Caco-2 (cell line): ENCODE measurements at regions of chr14 and their contacts with region 1.

Region 1: GRCh38 chr14:20413045-20413799 is at the start of gene TEP1:
- DNase-seq: peak; percentile 85 to 88
- H3K4me3 ChIP-seq: peak within 1 kb of the TSS; percentile 97
- H3K4me3 Mint-ChIP-seq: peak within 1 kb of the TSS; percentile 97
- H3K27ac Mint-ChIP-seq: peak within 1 kb of the TSS; percentile 93
- H3K4me1 ChIP-seq: peaks cover 32% of the 10 kb centered on the region
- H3K4me1 Mint-ChIP-seq: peaks cover 19% of the 10 kb centered on the region
- H3K27me3 ChIP-seq: no peaks in the 10 kb centered on the region
- H3K27me3 Mint-ChIP-seq: no peaks in the 10 kb centered on the region
- CTCF ChIP-seq: no peak
- total RNA-seq, gene TEP1: 18.8 and 23.2 TPM in 2 replicates

Region 2: GRCh38 chr14:20427231-20428009 is 14.2 kb after region 1 on chr14:
- CTCF ChIA-PET with region 1: interaction called, 4 read pairs
- POLR2A ChIA-PET with region 1: no interaction called
- intact Hi-C with region 1: loop called (anchors 2 kb)
- DNase-seq: no peak
- H3K4me3 ChIP-seq: peak overlapping the region; percentile 22
- H3K4me3 Mint-ChIP-seq: no peak overlapping the region
- H3K27ac Mint-ChIP-seq: peak overlapping the region; percentile 6
- H3K4me1 ChIP-seq: peaks cover 22% of the 10 kb centered on the region
- H3K4me1 Mint-ChIP-seq: peaks cover 23% of the 10 kb centered on the region
- H3K27me3 ChIP-seq: no peaks in the 10 kb centered on the region
- H3K27me3 Mint-ChIP-seq: no peaks in the 10 kb centered on the region
- CTCF ChIP-seq: no peak

Region 3: DNA sequence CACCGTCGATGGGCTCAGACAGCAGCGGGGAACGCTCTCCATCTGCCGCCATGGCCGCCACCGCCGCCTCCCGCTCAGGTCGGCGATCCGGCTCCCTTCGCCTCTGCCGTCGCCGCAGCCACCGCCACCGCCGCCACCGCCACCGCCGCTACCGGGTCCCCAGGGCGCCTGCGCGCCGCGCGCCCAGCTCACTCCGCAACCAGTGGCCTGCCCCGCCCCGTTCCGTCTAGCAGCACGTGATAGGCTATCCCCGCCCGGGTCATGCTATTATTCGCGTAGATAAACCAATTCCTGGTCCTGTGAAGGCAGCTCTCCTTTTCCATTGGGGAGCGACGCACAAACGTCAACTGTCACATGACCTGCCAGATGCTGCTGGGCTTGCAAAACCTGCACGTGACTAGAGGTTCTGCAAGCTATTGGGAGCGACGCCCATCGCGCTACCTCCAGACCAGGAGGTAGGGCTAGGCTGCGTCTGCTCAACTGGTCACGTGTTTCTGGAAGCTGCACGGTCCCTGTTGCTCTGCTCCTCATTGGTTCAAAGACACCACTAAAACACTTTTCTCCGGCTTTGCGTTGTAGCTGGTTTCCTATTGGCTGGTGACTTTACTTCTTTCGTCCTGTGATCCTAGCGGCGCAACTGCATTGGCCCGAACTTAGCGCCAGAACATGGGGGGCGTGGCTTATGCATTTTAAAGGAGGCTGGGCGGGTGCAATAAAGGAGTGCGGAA is 48.2 kb after region 1 on chr14 and contains the start of gene PIP4P1:
- CTCF ChIA-PET with region 1: interaction called, 9 read pairs
- POLR2A ChIA-PET with region 1: interaction called, 11 read pairs
- intact Hi-C with region 1: no loop called
- DNase-seq: peak; percentile 99 to 100
- H3K4me3 ChIP-seq: peak within 1 kb of the TSS; percentile 93
- H3K4me3 Mint-ChIP-seq: peak within 1 kb of the TSS; percentile 83
- H3K27ac Mint-ChIP-seq: peak within 1 kb of the TSS; percentile 96
- H3K4me1 ChIP-seq: peaks cover 16% of the 10 kb centered on the region
- H3K4me1 Mint-ChIP-seq: peaks cover 17% of the 10 kb centered on the region
- H3K27me3 ChIP-seq: no peaks in the 10 kb centered on the region
- H3K27me3 Mint-ChIP-seq: no peaks in the 10 kb centered on the region
- CTCF ChIP-seq: no peak
- total RNA-seq, gene PIP4P1: 39.6 and 46.2 TPM in 2 replicates

Region 4: GRCh38 chr14:20539906-20540305 is 126.7 kb after region 1 on chr14:
- CTCF ChIA-PET with region 1: no interaction called
- POLR2A ChIA-PET with region 1: no interaction called
- intact Hi-C with region 1: loop called (anchors 10 kb)
- DNase-seq: no peak
- H3K4me3 ChIP-seq: no peak overlapping the region
- H3K4me3 Mint-ChIP-seq: no peak overlapping the region
- H3K27ac Mint-ChIP-seq: no peak overlapping the region
- H3K4me1 ChIP-seq: no peaks in the 10 kb centered on the region
- H3K4me1 Mint-ChIP-seq: no peaks in the 10 kb centered on the region
- H3K27me3 ChIP-seq: no peaks in the 10 kb centered on the region
- H3K27me3 Mint-ChIP-seq: peaks cover 2% of the 10 kb centered on the region
- CTCF ChIP-seq: no peak

Region 5: DNA sequence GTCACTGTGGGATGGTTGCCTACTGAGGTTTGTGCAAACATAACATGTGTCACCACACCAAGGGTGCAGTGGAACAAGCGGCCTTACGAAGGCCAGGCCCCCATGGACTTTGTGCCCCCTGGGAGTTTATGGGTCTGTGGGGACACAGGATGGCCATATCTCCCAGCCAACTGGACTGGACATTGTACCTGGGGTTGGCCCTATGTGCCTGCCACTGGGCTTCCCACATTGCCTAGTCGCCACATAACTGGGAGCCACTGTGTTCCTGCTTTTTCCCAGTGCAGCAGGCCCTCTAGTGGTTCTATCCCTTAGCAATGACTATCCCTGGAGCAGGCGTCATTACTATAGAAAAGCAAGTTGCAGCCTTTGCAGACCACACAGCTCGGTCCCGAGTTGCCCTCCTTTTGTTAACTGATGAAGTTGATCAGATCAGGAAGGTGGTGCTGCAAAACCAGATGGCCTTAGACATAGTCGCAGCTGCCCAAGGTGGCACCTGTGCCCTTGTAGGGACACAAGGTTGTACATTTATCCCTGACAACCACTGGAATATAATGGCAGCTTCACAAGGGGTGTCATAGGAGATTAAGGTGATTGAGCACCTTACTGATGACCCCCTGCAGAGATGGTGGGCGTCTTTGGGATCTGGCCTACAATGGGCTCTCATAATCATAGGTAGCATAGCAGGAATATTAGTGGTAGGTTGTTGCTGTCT is 193.1 kb after region 1 on chr14:
- CTCF ChIA-PET with region 1: interaction called, 3 read pairs
- POLR2A ChIA-PET with region 1: interaction called, 6 read pairs
- intact Hi-C with region 1: loop called (anchors 1 kb)
- DNase-seq: peak; percentile 68 to 73
- H3K4me3 ChIP-seq: no peak overlapping the region
- H3K4me3 Mint-ChIP-seq: no peak overlapping the region
- H3K27ac Mint-ChIP-seq: no peak overlapping the region
- H3K4me1 ChIP-seq: no peaks in the 10 kb centered on the region
- H3K4me1 Mint-ChIP-seq: peaks cover 6% of the 10 kb centered on the region
- H3K27me3 ChIP-seq: no peaks in the 10 kb centered on the region
- H3K27me3 Mint-ChIP-seq: no peaks in the 10 kb centered on the region
- CTCF ChIP-seq: peak; percentile 52 to 79

Region 6: DNA sequence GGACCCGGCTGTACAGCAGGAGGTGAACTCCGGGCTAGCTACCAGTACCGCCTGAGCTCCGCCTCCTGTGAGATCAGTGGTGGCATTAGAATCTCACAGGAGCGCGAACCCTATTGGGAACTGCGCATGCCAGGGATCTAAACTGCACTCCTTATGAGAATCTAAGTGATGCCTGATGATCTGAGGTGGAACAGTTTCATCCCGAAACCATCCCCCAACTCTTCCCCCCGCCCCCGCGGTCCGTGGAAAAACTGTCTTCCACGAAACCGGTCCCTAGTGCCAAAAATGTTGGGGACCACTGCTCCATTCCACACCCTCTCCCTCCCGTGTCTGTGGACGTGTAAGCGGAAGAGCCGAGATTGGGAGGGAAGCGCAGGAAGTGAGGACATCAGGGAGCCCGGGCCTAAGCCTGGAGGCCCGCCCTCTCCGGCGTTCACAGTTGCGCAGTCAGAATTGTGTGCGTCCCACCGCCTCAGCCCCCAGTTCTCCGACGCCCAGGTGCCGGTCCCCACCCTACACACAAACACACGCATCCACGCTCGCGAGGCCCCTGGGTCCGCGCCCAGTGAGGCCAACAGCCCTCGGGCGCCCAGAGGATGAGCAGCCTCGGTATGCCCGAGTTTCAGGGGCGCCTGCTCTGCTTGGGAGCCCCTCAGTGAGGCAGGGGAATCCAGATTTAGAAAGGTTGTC is 269.4 kb after region 1 on chr14:
- CTCF ChIA-PET with region 1: no interaction called
- POLR2A ChIA-PET with region 1: no interaction called
- intact Hi-C with region 1: loop called (anchors 5 kb)
- DNase-seq: peak; percentile 82 to 88
- H3K4me3 ChIP-seq: peak overlapping the region; percentile 61
- H3K4me3 Mint-ChIP-seq: no peak overlapping the region
- H3K27ac Mint-ChIP-seq: no peak overlapping the region
- H3K4me1 ChIP-seq: peaks cover 16% of the 10 kb centered on the region
- H3K4me1 Mint-ChIP-seq: peaks cover 15% of the 10 kb centered on the region
- H3K27me3 ChIP-seq: no peaks in the 10 kb centered on the region
- H3K27me3 Mint-ChIP-seq: no peaks in the 10 kb centered on the region
- CTCF ChIP-seq: no peak

Region 7: DNA sequence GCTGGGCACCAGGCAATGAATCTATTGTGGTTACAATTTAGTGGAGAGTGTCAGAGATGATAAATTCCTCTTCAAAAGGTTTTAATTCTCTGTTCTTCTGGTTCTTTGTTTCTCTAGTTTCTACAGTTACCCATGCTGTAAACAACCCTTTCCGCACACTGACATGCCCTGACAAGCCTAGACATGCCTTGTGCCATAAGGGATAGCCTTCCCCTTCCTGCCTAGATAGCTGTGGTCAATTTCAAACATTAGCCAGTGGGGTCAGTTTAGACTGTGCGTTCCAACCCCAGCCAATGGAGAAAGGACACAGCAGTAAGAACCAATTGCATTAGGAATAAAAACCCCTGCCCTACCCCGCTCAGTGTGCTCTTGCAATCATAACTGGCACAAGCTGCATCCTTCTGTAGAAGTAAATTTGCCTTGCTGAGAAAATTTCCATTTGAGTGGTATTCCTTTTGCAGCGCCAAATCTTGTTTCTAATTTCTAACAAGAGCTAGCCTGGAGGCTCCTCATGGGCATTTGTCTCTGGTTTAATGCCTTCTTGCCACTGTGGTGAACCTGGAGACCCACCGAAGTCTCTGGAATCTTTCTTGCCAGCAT is 338.8 kb after region 1 on chr14:
- CTCF ChIA-PET with region 1: no interaction called
- POLR2A ChIA-PET with region 1: no interaction called
- intact Hi-C with region 1: no loop called
- DNase-seq: no peak
- H3K4me3 ChIP-seq: no peak overlapping the region
- H3K4me3 Mint-ChIP-seq: no peak overlapping the region
- H3K27ac Mint-ChIP-seq: no peak overlapping the region
- H3K4me1 ChIP-seq: no peaks in the 10 kb centered on the region
- H3K4me1 Mint-ChIP-seq: peaks cover 7% of the 10 kb centered on the region
- H3K27me3 ChIP-seq: no peaks in the 10 kb centered on the region
- H3K27me3 Mint-ChIP-seq: no peaks in the 10 kb centered on the region
- CTCF ChIP-seq: no peak